ENCODE measurements at regions of chr10 and their contacts with region 1.

Region 1: DNA sequence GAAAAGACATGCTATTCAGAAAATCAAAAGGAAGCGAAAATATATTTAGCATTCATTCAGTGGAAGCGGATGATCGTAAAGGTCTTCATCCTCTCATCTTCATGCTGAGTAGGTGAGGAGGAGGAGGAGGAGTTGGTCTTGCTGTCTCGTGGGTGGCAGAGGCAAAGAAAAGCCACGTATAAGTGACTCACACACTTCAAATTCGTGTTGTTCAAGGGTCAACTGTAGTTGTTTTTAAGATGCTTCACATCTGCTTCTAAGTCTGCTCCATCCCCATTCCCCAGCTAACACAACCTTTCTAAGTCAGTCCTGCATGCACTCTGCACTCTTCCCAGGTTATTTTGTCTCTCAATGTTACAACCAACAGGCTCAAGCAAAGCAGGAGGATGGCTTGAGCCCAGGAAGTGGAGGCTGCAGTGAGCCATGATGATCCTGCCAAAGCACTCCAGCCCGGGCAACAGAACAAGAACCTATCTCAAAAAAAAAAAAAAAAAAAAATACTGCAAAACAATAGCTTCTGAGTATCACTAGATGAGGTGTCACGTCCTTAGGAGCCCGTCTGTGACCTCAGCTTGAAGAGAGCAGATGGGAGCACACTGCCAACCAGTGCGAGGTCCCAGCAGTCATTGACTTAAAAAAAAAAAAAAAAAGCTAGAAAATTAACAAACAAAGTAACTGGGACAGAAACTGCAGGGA is 70.5 kb downstream of the SFMBT2 start:
- DNase-seq: no peak
- ATAC-seq: peak; percentile 90

Region 2: DNA sequence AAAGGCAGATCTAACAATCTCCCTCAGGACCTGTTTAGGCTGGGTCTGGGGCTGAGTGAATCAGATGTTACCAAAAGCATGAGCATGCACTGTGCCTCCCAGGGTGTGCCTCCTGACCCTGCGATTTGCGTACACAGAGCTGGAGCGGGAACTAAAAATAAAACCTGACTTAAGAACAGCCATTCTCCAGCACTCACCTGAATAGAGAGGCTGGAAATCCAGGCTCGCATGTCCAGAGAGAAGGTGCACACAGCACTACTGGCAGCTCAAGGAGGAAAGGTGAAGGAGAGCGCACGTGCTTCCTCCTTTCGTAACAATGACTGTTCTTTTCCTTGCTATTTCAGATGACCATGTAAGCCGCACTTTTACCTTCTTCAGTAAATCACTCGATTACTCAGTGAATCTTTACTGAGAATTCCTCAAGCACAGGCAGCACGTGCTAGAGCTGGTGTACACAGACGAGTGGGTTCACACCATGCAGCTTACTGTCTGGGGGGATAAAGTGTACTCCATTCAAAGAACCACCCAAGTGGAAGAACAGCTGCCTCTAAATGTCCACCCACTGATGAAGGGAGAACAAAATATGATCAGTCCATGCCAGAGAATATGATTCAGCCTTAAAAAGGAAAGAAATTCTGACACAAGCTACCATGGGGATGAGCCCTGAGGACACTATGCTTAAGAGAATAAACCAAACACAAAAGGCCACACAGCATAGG is 24.9 kb after region 1 on chr10:
- intact Hi-C with region 1: loop called (anchors 2 kb)
- DNase-seq: no peak
- ATAC-seq: peak; percentile 52

Measured in Right ventricle myocardium inferior (tissue), 1 donor.